Caco-2 (cell line): ENCODE measurements at regions of chr16 and their contacts with region 1.

Region 1: GRCh38 chr16:11312718-11313492 is 31.8 kb upstream of the PRM1 start:
- DNase-seq: peak; percentile 82 to 86
- H3K4me3 ChIP-seq: peak overlapping the region; percentile 17
- H3K4me3 Mint-ChIP-seq: peak overlapping the region; percentile 70
- H3K27ac Mint-ChIP-seq: peak overlapping the region; percentile 80
- H3K4me1 ChIP-seq: peaks cover 38% of the 10 kb centered on the region
- H3K4me1 Mint-ChIP-seq: peaks cover 14% of the 10 kb centered on the region
- H3K27me3 ChIP-seq: no peaks in the 10 kb centered on the region
- H3K27me3 Mint-ChIP-seq: no peaks in the 10 kb centered on the region
- CTCF ChIP-seq: no peak

Region 2: DNA sequence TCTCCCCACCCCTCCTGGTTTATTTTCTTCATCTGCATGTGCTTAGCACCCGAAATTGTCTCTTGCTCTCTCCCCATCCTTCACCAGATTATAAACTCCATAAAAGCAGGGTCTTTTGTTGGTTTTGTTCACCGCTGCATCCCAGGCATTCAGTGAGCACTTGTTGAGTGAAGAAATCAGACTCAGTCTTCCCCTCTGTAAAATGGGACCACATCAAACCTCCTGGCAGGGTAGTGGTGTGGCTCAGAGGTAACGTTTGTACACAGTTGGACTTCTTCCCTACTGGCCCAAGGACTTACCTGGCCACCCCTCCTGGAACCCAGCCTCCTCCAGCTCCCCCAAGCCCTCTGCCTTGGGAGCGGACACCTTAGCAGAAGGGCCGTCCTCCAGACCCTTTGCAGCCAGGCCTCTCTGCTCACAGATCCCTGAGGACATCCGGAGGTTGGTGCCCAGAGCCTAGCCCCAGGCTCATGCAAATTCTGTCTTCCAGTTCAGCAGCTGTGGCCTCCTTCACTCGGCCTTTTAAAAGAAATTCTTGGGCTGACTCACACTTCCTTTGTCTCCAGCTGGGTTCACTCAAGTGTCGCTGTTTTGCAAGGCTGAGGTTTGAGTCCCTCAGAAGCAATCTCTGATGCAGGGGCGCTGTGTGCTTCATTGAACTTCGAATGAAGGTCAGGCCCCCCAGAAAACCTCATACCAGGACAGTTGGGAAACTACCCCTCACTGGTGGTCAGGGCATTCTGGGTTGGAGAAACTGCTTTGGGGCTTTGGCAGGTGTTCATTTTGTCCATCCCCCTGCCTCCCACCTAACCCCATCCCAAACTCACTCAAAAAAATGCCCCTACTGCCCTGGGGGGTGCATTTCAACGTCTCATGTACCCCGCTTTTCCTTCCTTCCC is 15.5 kb after region 1 on chr16:
- CTCF ChIA-PET with region 1: no interaction called
- POLR2A ChIA-PET with region 1: interaction called, 5 read pairs
- intact Hi-C with region 1: loop called (anchors 2 kb)
- DNase-seq: peak; percentile 56 to 73
- H3K4me3 ChIP-seq: no peak overlapping the region
- H3K4me3 Mint-ChIP-seq: peak overlapping the region; percentile 61
- H3K27ac Mint-ChIP-seq: peak overlapping the region; percentile 86
- H3K4me1 ChIP-seq: peaks cover 25% of the 10 kb centered on the region
- H3K4me1 Mint-ChIP-seq: peaks cover 26% of the 10 kb centered on the region
- H3K27me3 ChIP-seq: no peaks in the 10 kb centered on the region
- H3K27me3 Mint-ChIP-seq: no peaks in the 10 kb centered on the region
- CTCF ChIP-seq: no peak

Region 3: DNA sequence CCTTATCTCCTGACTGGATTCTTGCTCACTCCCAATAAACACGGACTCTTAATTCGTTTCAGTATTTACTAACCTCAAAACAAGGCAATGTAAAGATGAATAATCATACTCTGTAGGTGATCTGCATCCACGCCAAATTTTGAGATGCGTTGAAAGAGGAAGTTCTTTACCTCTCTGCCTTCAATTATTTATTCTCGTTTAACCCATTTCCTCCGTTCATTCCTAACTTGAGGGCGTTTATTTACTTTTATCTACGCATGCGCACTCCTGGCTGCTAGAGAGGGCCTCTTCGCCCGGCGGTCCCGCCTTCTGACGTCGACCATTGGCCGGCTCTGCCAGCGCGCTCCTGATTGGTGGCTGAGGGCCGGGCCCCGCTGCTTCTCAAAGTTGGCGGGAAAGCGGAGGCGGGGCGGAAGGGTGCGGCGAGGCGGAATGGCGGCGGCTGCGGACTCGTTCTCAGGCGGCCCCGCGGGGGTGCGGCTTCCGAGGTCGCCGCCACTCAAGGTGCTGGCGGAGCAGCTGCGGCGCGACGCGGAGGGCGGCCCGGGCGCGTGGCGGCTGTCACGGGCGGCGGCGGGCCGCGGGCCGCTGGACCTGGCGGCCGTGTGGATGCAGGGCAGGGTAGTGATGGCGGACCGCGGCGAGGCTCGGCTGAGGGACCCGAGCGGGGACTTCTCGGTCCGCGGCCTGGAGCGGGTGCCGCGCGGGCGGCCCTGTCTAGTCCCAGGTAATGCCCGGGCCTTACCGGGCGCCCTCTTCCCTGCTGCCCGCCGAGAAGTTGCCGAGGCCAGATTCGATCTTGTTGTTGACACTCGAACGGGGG is 32.3 kb after region 1 on chr16 and contains the start of gene RMI2:
- CTCF ChIA-PET with region 1: no interaction called
- POLR2A ChIA-PET with region 1: no interaction called
- intact Hi-C with region 1: loop called (anchors 1 kb)
- DNase-seq: peak; percentile 95 to 96
- H3K4me3 ChIP-seq: peak within 1 kb of the TSS; percentile 91
- H3K4me3 Mint-ChIP-seq: peak within 1 kb of the TSS; percentile 89
- H3K27ac Mint-ChIP-seq: peak within 1 kb of the TSS; percentile 73
- H3K4me1 ChIP-seq: 0 out of 2 replicates have a peak, but pooled peaks cover 3% of the 10 kb centered on the region
- H3K4me1 Mint-ChIP-seq: peaks cover 5% of the 10 kb centered on the region
- H3K27me3 ChIP-seq: no peaks in the 10 kb centered on the region
- H3K27me3 Mint-ChIP-seq: no peaks in the 10 kb centered on the region
- CTCF ChIP-seq: no peak
- total RNA-seq, gene RMI2: 47.4 and 52.7 TPM in 2 replicates

Region 4: GRCh38 chr16:11356573-11357331 is 43.8 kb after region 1 on chr16:
- CTCF ChIA-PET with region 1: interaction called, 3 read pairs
- POLR2A ChIA-PET with region 1: interaction called, 10 read pairs
- intact Hi-C with region 1: loop called (anchors 2 kb)
- DNase-seq: peak; percentile 60 to 66
- H3K4me3 ChIP-seq: no peak overlapping the region
- H3K4me3 Mint-ChIP-seq: no peak overlapping the region
- H3K27ac Mint-ChIP-seq: no peak overlapping the region
- H3K4me1 ChIP-seq: peaks cover 38% of the 10 kb centered on the region
- H3K4me1 Mint-ChIP-seq: peaks cover 6% of the 10 kb centered on the region
- H3K27me3 ChIP-seq: no peaks in the 10 kb centered on the region
- H3K27me3 Mint-ChIP-seq: no peaks in the 10 kb centered on the region
- CTCF ChIP-seq: peak; percentile 54 to 67